Motor neuron (in vitro differentiated cells): ENCODE measurements at regions of chr12 and their contacts with region 1.

Region 1: GRCh38 chr12:11576104-11576503 is 73.4 kb upstream of the ETV6 start:
- ATAC-seq: no peak
- H3K4me3 ChIP-seq: no peak overlapping the region
- H3K27ac ChIP-seq: no peak overlapping the region
- H3K4me1 ChIP-seq: no peaks in the 10 kb centered on the region

Region 2: DNA sequence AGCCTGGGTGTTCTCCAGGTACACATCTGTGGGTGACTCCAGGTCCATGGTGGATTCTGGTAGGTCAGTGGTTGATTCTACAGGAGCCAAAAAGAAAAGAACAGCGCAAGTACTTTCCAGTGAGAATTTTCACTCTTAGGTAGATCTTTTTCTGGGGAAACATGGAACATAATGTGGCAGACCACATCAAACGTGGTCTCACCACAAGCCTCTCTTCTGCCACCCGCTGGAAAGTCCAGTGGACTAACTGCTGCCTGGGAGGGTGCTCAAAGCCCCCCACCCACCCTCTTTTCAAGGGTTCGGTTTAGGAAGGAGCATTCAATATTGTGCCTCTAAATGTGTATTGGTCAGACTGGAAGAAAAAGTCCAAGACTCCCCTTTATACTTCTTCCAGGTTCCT is 144.6 kb before region 1 on chr12:
- in situ Hi-C with region 1: no loop called
- ATAC-seq: no peak
- H3K4me3 ChIP-seq: no peak overlapping the region
- H3K27ac ChIP-seq: no peak overlapping the region
- H3K4me1 ChIP-seq: no peaks in the 10 kb centered on the region

Region 3: GRCh38 chr12:12032851-12033588 is 456.9 kb after region 1 on chr12:
- in situ Hi-C with region 1: loop called (anchors 5 to 25 kb)
- ATAC-seq: peak; percentile 70 to 93 (median 90)
- H3K4me3 ChIP-seq: peak overlapping the region; percentile 12 to 35 (median 20)
- H3K27ac ChIP-seq: peak overlapping the region in 1 of 2 donors; percentile 67
- H3K4me1 ChIP-seq: peaks cover 6% of the 10 kb centered on the region in 2 donors

Region 4: DNA sequence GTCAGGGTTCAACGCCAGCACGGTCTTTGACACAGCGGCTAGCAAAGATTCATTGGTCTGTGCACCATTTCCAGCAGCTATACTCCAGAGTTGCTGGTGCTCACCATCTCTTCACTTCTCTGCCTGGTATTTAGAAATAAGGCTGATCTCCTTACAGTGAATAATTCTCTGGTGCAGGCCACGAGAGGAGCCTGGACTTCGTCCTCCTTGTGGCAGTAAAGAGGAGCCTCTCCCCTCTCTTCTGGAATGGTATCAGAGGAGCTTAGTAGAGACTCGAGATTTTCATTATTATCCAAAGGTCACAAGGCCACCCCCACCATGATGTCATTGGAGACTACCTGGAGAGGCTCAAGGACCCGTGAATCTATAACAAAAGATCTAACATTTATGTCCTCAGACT is 463.8 kb after region 1 on chr12:
- in situ Hi-C with region 1: loop called in 8 of 9 experiments (anchors 5 to 25 kb)
- ATAC-seq: no peak
- H3K4me3 ChIP-seq: no peak overlapping the region
- H3K27ac ChIP-seq: no peak overlapping the region
- H3K4me1 ChIP-seq: no peaks in the 10 kb centered on the region